IMR-90 (cell line): ENCODE measurements at regions of chr11 and their contacts with region 1.

Region 1: GRCh38 chr11:86608251-86608799 is 64.1 kb downstream of the ME3 start:
- DNase-seq: peak; percentile 80
- ATAC-seq: peak; percentile 73
- H3K4me3 ChIP-seq: no peak overlapping the region
- H3K27ac ChIP-seq: no peak overlapping the region
- H3K4me1 ChIP-seq: peaks cover 5% of the 10 kb centered on the region
- H3K27me3 ChIP-seq: no peaks in the 10 kb centered on the region
- CTCF ChIP-seq: peak; percentile 75
- POLR2A ChIP-seq: no peak
- RAD21 ChIP-seq: peak; percentile 59

Region 2: GRCh38 chr11:86360775-86361395 is 247.4 kb before region 1 on chr11:
- CTCF ChIA-PET with region 1: no interaction called
- POLR2A ChIA-PET with region 1: no interaction called
- dilution Hi-C with region 1: no loop called
- in situ Hi-C with region 1: no loop called
- intact Hi-C with region 1: loop called (anchors 5 kb)
- DNase-seq: peak; percentile 73
- ATAC-seq: peak; percentile 89
- H3K4me3 ChIP-seq: no peak overlapping the region
- H3K27ac ChIP-seq: no peak overlapping the region
- H3K4me1 ChIP-seq: peaks cover 3% of the 10 kb centered on the region; the same call in 1 of the 2 replicates
- H3K27me3 ChIP-seq: no peaks in the 10 kb centered on the region
- CTCF ChIP-seq: peak; percentile 63
- POLR2A ChIP-seq: no peak
- RAD21 ChIP-seq: peak; percentile 68

Region 3: DNA sequence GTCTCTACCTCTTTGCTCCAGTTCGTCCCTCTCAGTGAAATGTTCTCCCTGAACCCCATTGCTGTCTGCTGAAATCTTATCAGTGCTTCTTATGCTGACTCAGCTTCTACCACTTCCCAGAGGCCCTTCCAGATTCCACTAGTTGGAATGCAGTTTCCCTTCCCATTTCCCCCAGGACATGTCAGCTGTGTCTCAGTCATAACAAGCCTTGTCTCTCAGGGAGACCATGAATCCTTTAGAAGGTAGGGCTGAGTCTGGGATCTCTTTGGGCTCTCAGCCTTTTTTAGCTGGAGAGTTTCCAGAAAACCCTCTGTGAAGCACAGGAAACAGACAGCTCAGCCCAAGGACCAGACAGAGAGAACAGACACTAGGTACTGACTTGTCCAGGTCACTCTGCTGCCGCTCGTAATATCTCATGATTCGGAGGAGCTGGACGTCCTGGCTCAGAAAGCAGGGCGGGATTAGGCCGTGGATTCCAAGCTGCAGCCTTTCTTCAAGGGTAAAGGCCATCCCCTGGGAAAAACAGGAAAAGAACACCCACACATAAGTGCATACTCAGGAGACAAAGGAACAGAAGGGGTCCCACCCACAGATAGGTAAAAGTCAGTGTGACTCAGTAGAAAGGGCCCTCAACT is 48.9 kb before region 1 on chr11:
- CTCF ChIA-PET with region 1: no interaction called
- POLR2A ChIA-PET with region 1: no interaction called
- dilution Hi-C with region 1: no loop called
- in situ Hi-C with region 1: no loop called
- intact Hi-C with region 1: no loop called
- DNase-seq: peak; percentile 78
- ATAC-seq: peak; percentile 80
- H3K4me3 ChIP-seq: no peak overlapping the region
- H3K27ac ChIP-seq: no peak overlapping the region
- H3K4me1 ChIP-seq: peaks cover 8% of the 10 kb centered on the region
- H3K27me3 ChIP-seq: no peaks in the 10 kb centered on the region
- CTCF ChIP-seq: no peak
- POLR2A ChIP-seq: no peak
- RAD21 ChIP-seq: no peak

Region 4: DNA sequence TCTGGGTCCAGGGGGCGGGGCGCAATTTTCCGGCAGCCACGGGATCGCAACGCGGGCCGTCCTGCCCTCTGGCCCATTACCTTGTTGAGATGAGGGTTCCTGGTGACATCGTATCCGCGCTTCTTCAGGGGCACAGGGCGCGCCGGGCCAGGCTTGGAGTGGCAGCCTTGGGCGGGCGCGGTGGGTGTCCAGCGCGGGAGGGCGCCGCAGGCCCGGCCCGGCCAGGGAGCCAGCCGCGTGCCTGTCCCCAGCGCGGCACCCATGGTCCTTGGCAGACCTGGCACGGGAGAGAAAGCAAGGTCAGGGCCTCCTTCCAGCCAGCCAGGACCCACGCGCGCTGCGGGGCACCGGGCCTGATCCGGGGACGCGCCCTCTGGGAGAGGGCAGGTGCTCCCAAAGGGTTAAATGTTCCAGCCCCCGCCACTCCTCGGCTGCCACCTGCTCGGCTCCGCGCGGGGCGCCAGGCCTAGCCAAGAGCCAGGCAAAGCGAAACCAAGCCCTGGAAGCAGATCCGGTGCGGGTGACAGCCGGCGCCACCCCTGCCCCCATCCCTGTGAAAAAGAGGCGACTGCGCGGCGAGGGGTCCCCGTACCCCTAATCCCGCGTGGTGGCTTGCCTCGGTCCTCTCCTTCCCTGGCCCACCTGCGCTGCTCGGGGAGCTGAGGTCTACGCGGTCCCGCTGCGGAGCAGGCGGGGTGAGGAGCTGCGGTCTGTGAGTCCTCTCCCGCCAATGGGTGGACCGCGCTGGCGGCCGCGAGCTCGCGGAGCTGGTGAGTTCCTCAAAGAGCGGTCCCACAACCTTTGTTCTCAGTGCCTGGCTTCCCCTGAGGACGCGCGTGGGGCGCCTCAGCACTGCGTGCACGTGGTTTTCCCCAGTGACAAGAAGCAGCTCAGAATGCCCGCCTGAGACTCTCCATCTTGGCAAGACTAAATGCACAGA is 63.6 kb after region 1 on chr11 and contains the start of gene ME3:
- CTCF ChIA-PET with region 1: interaction called, 7 read pairs
- POLR2A ChIA-PET with region 1: no interaction called
- dilution Hi-C with region 1: no loop called
- in situ Hi-C with region 1: no loop called
- intact Hi-C with region 1: loop called (anchors 2 kb)
- DNase-seq: peak; percentile 44
- ATAC-seq: peak; percentile 83
- H3K4me3 ChIP-seq: peak within 1 kb of the TSS; percentile 64
- H3K27ac ChIP-seq: peak within 1 kb of the TSS; percentile 18; the same call in 1 of the 2 replicates
- H3K4me1 ChIP-seq: 0 out of 2 replicates have a peak, but pooled peaks cover 2% of the 10 kb centered on the region
- H3K27me3 ChIP-seq: no peaks in the 10 kb centered on the region
- CTCF ChIP-seq: no peak
- POLR2A ChIP-seq: no peak
- RAD21 ChIP-seq: 0 out of 2 replicates have a peak, but pooled peaks have one; percentile 3
- total RNA-seq, gene ME3: 9.0 and 9.2 TPM in 2 replicates

Region 5: GRCh38 chr11:86740709-86741483 is 132.6 kb after region 1 on chr11:
- CTCF ChIA-PET with region 1: interaction called, 3 read pairs
- POLR2A ChIA-PET with region 1: no interaction called
- dilution Hi-C with region 1: no loop called
- in situ Hi-C with region 1: no loop called
- intact Hi-C with region 1: loop called (anchors 5 kb)
- DNase-seq: peak; percentile 98
- ATAC-seq: peak; percentile 58
- H3K4me3 ChIP-seq: no peak overlapping the region
- H3K27ac ChIP-seq: peak overlapping the region; percentile 97
- H3K4me1 ChIP-seq: peaks cover 37% of the 10 kb centered on the region
- H3K27me3 ChIP-seq: no peaks in the 10 kb centered on the region
- CTCF ChIP-seq: no peak
- POLR2A ChIP-seq: 0 out of 2 replicates have a peak, but pooled peaks have one; percentile 2
- RAD21 ChIP-seq: no peak

Region 6: GRCh38 chr11:86802601-86803051 is 194.3 kb after region 1 on chr11:
- CTCF ChIA-PET with region 1: interaction called, 3 read pairs
- POLR2A ChIA-PET with region 1: no interaction called
- dilution Hi-C with region 1: no loop called
- in situ Hi-C with region 1: no loop called
- intact Hi-C with region 1: loop called (anchors 5 kb)
- DNase-seq: peak; percentile 57
- ATAC-seq: peak; percentile 15; the same call in 1 of the 2 replicates
- H3K4me3 ChIP-seq: peak overlapping the region; percentile 82; the same call in 1 of the 2 replicates
- H3K27ac ChIP-seq: no peak overlapping the region
- H3K4me1 ChIP-seq: peaks cover 22% of the 10 kb centered on the region
- H3K27me3 ChIP-seq: no peaks in the 10 kb centered on the region
- CTCF ChIP-seq: peak; percentile 45
- POLR2A ChIP-seq: no peak
- RAD21 ChIP-seq: peak; percentile 42

Region 7: DNA sequence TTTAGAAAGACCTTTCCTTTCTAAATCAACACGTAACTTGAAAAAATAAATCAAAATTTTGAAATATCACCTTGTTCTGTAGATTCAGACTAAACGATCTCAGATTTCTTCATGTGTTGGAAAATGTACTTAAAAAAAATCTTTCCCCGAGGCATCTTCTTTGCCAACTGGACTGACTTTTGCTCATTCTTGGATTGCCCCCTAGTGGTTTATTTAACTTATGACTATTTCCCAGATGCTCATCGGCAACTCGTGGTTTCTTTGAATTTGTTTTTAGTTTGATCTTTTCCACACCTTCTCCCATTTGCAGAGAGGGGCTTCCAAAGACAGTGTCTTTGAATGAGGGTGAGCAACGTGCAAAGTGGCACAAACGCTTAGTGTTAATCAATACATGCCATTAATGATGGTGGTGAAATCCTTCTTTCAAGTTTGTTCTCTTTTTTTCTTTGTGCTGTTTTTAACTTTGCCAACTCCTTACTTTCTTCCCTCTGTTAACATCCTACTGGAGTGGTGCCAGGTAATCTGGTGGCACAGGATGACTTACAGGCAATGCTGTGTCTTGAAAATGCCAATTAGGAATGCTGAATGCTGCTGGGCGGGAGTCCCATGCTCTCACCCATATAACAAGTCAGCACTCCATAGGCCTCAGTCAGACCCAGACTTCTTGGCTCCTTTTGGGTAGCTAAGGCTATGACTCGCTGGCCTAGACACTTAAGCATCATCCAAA is 210.3 kb after region 1 on chr11:
- CTCF ChIA-PET with region 1: interaction called, 5 read pairs
- POLR2A ChIA-PET with region 1: no interaction called
- dilution Hi-C with region 1: no loop called
- in situ Hi-C with region 1: loop called (anchors 5 kb)
- intact Hi-C with region 1: loop called (anchors 1 kb)
- DNase-seq: peak; percentile 81
- ATAC-seq: peak; percentile 48
- H3K4me3 ChIP-seq: no peak overlapping the region
- H3K27ac ChIP-seq: no peak overlapping the region
- H3K4me1 ChIP-seq: peaks cover 15% of the 10 kb centered on the region
- H3K27me3 ChIP-seq: no peaks in the 10 kb centered on the region
- CTCF ChIP-seq: peak; percentile 87
- POLR2A ChIP-seq: 0 out of 2 replicates have a peak, but pooled peaks have one; percentile 39
- RAD21 ChIP-seq: peak; percentile 94

Region 8: DNA sequence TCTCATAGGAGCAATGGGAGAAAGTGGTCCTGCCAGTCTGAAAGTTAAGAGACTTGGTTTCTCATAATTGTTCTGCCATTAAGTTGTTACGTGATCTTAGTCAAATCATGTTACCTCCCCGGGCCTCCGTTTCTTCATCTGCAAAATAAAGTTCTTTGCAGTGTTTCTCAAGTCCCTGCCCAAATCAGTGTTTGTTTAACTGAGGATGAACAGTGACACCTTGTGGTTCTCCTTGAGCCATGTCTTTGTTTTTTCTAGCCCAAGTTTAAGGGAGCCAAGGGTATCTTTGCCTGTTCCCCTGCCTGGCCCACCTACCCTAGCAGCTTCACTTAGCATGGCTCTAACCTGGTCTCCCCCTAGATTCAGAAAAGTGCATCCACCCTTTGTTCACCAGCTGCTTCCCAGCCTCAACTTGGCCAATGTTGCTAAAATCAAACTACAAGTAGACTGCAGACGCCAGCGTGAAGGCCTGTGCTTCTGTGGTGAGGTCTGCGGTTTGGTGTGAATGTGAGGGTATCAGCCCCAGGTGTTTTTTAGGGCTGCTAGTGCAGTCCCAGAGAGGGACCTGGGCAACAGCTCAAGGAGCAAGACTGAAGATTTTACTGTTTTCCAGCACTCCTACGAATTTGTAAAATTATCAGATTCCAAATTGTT is 311.4 kb after region 1 on chr11:
- CTCF ChIA-PET with region 1: no interaction called
- POLR2A ChIA-PET with region 1: no interaction called
- dilution Hi-C with region 1: no loop called
- in situ Hi-C with region 1: no loop called
- intact Hi-C with region 1: loop called (anchors 5 kb)
- DNase-seq: peak; percentile 81
- ATAC-seq: peak; percentile 70
- H3K4me3 ChIP-seq: no peak overlapping the region
- H3K27ac ChIP-seq: no peak overlapping the region
- H3K4me1 ChIP-seq: peaks cover 8% of the 10 kb centered on the region
- H3K27me3 ChIP-seq: no peaks in the 10 kb centered on the region
- CTCF ChIP-seq: peak; percentile 82
- POLR2A ChIP-seq: no peak
- RAD21 ChIP-seq: peak; percentile 85

Region 9: DNA sequence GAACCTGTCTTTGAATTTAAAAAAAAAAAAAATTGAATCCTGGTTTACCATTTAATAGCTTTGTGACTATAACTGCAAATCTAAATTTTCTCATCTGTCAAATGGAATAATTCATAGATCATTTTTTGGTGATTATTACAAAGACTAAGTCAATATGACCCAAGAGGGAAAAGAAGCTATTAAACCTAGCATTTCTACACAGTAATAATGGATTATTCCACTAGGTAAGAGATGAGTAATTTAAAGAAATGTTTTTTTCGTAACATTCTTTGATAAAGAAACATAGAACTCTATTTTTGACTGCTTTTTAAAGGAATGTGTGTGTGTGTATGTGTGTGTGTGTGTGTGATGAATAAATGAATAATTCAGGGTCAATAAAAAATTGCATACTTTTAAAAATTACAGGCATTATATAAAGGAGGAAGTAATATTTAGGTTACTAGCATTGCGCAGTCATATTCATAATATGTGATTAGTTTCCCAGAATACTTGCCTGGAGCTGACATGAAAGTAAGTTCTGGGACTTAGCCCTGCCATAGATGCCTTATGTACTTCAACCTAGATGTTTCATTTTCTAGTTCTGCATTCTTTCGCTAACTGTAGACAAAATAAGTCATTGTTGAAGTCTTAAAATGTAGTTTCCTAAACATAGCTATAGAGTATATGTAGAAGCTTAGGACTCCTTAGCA is 502.3 kb after region 1 on chr11:
- CTCF ChIA-PET with region 1: no interaction called
- POLR2A ChIA-PET with region 1: no interaction called
- dilution Hi-C with region 1: no loop called
- in situ Hi-C with region 1: no loop called
- intact Hi-C with region 1: no loop called
- DNase-seq: no peak
- ATAC-seq: no peak
- H3K4me3 ChIP-seq: no peak overlapping the region
- H3K27ac ChIP-seq: no peak overlapping the region
- H3K4me1 ChIP-seq: no peaks in the 10 kb centered on the region
- H3K27me3 ChIP-seq: no peaks in the 10 kb centered on the region
- CTCF ChIP-seq: no peak
- POLR2A ChIP-seq: no peak
- RAD21 ChIP-seq: no peak